GM12878 (cell line): ENCODE measurements at regions of chr9 and their contacts with region 1.

Region 1: GRCh38 chr9:6681147-6681956 is 35.8 kb upstream of the GLDC start:
- DNase-seq: peak; percentile 88
- ATAC-seq: peak; percentile 84
- H3K4me3 ChIP-seq: peak overlapping the region; percentile 88
- H3K27ac ChIP-seq: peak overlapping the region; percentile 99
- H3K4me1 ChIP-seq: peaks cover 20% of the 10 kb centered on the region
- H3K27me3 ChIP-seq: no peaks in the 10 kb centered on the region
- CTCF ChIP-seq: no peak
- EP300 ChIP-seq: peak in 1 of 2 experiments; percentile 20; a peak in 1 of 4 replicates
- POLR2A ChIP-seq: peak; percentile 91
- RAD21 ChIP-seq: no peak

Region 2: DNA sequence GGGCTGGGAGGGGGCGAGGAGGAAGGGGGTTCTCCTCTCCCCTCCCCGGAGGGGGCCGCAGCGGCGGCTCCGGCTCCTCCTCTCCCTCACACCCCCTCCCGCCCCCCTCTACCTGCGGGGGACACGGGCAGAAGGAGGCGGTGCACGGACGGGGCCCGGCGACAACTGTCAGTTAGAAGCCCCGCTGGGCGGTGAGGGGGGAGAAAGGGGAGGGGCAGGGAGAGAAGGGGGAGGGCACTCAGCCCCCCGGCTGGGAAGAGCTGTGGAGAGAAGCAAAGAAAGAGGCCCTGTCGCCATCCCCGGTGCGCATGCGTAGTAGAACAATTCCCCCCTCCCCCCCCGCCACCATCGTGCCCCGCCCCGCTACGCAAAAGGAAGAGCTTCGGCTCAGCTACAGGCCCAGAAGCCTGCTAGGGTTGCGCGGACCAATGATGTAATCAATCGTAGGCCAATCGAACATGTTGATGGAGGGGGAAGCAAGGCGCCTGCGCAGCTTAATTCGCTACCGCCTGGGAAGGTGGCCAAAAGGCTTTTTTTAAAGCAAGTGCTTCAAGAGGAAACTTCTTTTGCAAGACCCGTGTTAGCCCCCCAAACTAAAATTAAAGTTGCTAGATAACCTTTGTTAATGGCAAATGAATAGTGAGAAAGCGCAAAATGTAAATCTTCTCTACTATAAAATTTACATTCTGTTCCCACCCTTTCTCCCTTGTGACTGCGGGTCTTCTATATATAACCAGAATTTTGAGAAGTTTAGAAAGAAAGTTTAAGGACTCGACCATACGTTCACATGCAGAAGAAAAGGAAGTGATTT is 673.0 kb before region 1 on chr9:
- CTCF ChIA-PET with region 1: no interaction called
- POLR2A ChIA-PET with region 1: no interaction called
- RAD21 ChIA-PET with region 1: no interaction called
- SMC1A ChIA-PET with region 1: no interaction called
- in situ Hi-C with region 1: no loop called
- intact Hi-C with region 1: loop called (anchors 10 kb)
- DNase-seq: peak; percentile 88
- ATAC-seq: peak; percentile 74
- H3K4me3 ChIP-seq: peak overlapping the region; percentile 82
- H3K27ac ChIP-seq: peak overlapping the region; percentile 66
- H3K4me1 ChIP-seq: peaks cover 12% of the 10 kb centered on the region
- H3K27me3 ChIP-seq: no peaks in the 10 kb centered on the region
- CTCF ChIP-seq: no peak
- EP300 ChIP-seq: no peak
- POLR2A ChIP-seq: peak; percentile 55
- RAD21 ChIP-seq: no peak

Region 3: GRCh38 chr9:6428940-6429889 is 252.1 kb before region 1 on chr9:
- CTCF ChIA-PET with region 1: no interaction called
- POLR2A ChIA-PET with region 1: no interaction called
- RAD21 ChIA-PET with region 1: no interaction called
- SMC1A ChIA-PET with region 1: interaction called, 3 read pairs
- in situ Hi-C with region 1: no loop called
- intact Hi-C with region 1: loop called (anchors 2 kb)
- DNase-seq: peak; percentile 49
- ATAC-seq: peak; percentile 93
- H3K4me3 ChIP-seq: no peak overlapping the region
- H3K27ac ChIP-seq: peak overlapping the region; percentile 55
- H3K4me1 ChIP-seq: peaks cover 54% of the 10 kb centered on the region
- H3K27me3 ChIP-seq: no peaks in the 10 kb centered on the region
- CTCF ChIP-seq: no peak
- EP300 ChIP-seq: peak in 1 of 2 experiments; percentile 59; a peak in 1 of 4 replicates
- POLR2A ChIP-seq: no peak
- RAD21 ChIP-seq: no peak

Region 4: DNA sequence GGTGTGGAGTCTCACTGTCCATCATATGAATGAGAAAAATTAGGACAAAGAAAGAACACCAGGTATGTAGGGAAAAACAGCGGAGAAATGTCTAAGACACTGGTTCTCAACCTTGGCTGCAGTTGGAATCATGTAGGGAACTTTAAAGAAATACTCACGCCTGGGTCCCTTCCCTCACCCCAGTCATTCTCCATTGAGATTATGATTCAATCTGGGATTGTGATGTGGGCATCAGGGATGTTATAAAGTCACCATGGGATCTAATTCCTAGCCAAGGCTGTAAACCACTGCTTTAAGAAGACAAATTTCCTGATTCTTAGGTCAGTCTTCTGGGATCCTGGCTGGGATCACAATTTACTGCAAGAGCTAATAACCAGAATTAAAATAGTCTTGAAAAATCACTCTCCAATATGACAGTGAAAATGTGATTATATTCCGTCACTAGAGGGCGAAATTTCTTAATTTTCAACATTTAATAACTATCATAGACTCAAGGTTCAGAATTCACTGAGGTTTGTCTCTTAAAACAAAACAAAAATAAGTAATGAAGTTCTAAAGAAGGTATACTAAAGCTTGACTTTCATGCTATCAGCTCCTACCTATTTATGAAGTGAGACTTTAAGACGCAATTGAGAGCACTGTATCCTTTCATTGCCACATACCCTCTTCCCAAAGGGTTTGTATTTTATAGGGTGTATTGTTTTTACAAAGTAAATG is 96.3 kb before region 1 on chr9:
- CTCF ChIA-PET with region 1: interaction called, 56 read pairs
- POLR2A ChIA-PET with region 1: interaction called, 3 read pairs
- RAD21 ChIA-PET with region 1: interaction called, 17 read pairs
- SMC1A ChIA-PET with region 1: interaction called, 40 read pairs
- in situ Hi-C with region 1: no loop called
- intact Hi-C with region 1: loop called (anchors 1 kb)
- DNase-seq: no peak
- ATAC-seq: peak; percentile 85
- H3K4me3 ChIP-seq: no peak overlapping the region
- H3K27ac ChIP-seq: no peak overlapping the region
- H3K4me1 ChIP-seq: no peaks in the 10 kb centered on the region
- H3K27me3 ChIP-seq: no peaks in the 10 kb centered on the region
- CTCF ChIP-seq: peak in 2 of 3 experiments; percentile 13 to 35; a peak in 3 of 6 replicates
- EP300 ChIP-seq: no peak
- POLR2A ChIP-seq: no peak
- RAD21 ChIP-seq: peak; percentile 42; the same call in 1 of the 2 replicates

Region 5: GRCh38 chr9:6645355-6646292 is 35.7 kb before region 1 on chr9 and contains the start of gene GLDC:
- CTCF ChIA-PET with region 1: interaction called, 5 read pairs
- POLR2A ChIA-PET with region 1: interaction called, 17 read pairs
- RAD21 ChIA-PET with region 1: interaction called, 7 read pairs
- SMC1A ChIA-PET with region 1: interaction called, 17 read pairs
- in situ Hi-C with region 1: no loop called
- intact Hi-C with region 1: loop called (anchors 2 kb)
- DNase-seq: no peak
- ATAC-seq: peak; percentile 91
- H3K4me3 ChIP-seq: peak within 1 kb of the TSS; percentile 94
- H3K27ac ChIP-seq: peak within 1 kb of the TSS; percentile 75
- H3K4me1 ChIP-seq: no peaks in the 10 kb centered on the region; the same call in 1 of the 2 replicates
- H3K27me3 ChIP-seq: no peaks in the 10 kb centered on the region
- CTCF ChIP-seq: no peak
- EP300 ChIP-seq: no peak
- POLR2A ChIP-seq: peak; percentile 80
- RAD21 ChIP-seq: no peak
- polyA plus RNA-seq, gene GLDC: 88.2 to 112 TPM

Region 6: DNA sequence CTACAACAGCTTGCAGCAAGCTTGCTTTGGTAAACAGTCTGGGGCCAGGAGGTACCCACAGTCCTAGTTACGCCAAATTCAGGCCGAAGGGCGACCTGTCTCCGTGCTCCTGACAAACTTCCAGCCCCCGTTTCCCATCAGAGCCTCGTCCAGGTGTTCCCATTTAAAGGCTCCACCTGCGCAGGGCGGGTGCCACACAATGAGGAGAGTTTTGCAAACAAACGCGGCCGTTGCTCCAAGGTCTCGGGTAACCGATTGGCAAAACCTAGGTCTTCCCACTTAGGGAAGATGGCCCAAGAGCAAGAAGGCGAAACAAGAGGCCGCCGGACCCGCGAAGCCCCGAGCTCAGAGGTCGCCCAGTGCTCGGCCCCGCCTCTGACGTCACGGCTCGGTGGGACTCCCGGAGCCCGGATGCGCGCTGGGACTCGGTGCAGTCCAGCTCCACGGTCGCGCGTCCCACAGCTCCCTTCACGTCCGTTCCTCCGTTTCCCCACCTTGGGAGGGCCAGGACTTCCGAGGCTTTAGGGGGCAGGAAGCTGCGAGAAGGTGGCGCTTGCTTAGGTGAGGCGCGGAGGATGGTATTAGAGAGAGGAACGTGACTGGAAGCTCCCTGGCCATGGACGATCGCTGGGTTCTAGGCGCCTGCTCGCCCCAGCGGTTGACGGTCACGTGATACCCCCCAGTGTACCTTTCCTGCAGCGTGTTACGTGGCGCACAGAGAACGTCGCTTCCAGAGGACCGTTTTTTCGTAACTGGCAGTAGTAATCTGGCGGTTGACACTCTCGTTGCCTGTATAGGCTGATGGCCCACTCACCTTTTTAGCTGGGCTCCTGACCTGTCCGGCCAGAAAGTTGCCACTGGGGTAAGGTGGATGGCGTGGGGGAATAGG is 34.6 kb after region 1 on chr9:
- CTCF ChIA-PET with region 1: interaction called, 10 read pairs
- POLR2A ChIA-PET with region 1: interaction called, 15 read pairs
- RAD21 ChIA-PET with region 1: interaction called, 9 read pairs
- SMC1A ChIA-PET with region 1: interaction called, 44 read pairs
- in situ Hi-C with region 1: no loop called
- intact Hi-C with region 1: no loop called
- DNase-seq: peak; percentile 76
- ATAC-seq: peak; percentile 96
- H3K4me3 ChIP-seq: peak overlapping the region; percentile 68
- H3K27ac ChIP-seq: peak overlapping the region; percentile 73
- H3K4me1 ChIP-seq: peaks cover 13% of the 10 kb centered on the region
- H3K27me3 ChIP-seq: no peaks in the 10 kb centered on the region
- CTCF ChIP-seq: no peak
- EP300 ChIP-seq: no peak
- POLR2A ChIP-seq: peak; percentile 97
- RAD21 ChIP-seq: no peak

Region 7: GRCh38 chr9:6757456-6758247 is 76.3 kb after region 1 on chr9 and contains the start of gene KDM4C:
- CTCF ChIA-PET with region 1: interaction called, 4 read pairs
- POLR2A ChIA-PET with region 1: interaction called, 10 read pairs
- RAD21 ChIA-PET with region 1: interaction called, 15 read pairs
- SMC1A ChIA-PET with region 1: interaction called, 4 read pairs
- in situ Hi-C with region 1: no loop called
- intact Hi-C with region 1: loop called (anchors 2 kb)
- DNase-seq: peak; percentile 88
- ATAC-seq: peak; percentile 89
- H3K4me3 ChIP-seq: peak within 1 kb of the TSS; percentile 76
- H3K27ac ChIP-seq: peak within 1 kb of the TSS; percentile 96
- H3K4me1 ChIP-seq: peaks cover 6% of the 10 kb centered on the region
- H3K27me3 ChIP-seq: no peaks in the 10 kb centered on the region
- CTCF ChIP-seq: no peak
- EP300 ChIP-seq: peak in 1 of 2 experiments; percentile 54; a peak in 2 of 4 replicates
- POLR2A ChIP-seq: peak; percentile 95
- RAD21 ChIP-seq: no peak
- polyA plus RNA-seq, gene KDM4C: 6.8 to 11.7 TPM

Region 8: DNA sequence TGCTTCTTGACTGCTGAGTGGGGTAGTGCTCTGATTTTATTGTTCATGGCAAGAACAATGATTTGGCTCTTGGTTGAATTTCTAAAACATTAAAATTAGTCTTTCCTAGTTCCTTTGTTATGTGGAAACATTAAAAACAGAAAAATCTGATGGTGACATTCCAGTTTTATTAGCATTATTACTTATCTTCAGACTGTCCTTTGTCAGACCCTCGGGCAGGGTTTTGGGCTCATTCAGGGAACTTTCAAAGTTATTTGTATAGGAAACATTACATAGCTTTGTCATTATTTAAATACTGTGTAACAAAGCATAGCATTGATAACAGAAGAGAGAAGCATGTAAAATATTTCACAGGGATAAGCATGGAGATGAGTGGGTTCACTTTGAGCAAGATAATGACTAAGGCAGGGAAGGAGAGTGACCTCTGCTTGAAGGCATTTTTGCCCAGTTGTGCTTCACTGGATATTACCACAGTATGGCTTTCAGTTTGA is 196.4 kb after region 1 on chr9:
- CTCF ChIA-PET with region 1: no interaction called
- POLR2A ChIA-PET with region 1: no interaction called
- RAD21 ChIA-PET with region 1: no interaction called
- SMC1A ChIA-PET with region 1: no interaction called
- in situ Hi-C with region 1: no loop called
- intact Hi-C with region 1: no loop called
- DNase-seq: no peak
- ATAC-seq: no peak
- H3K4me3 ChIP-seq: no peak overlapping the region
- H3K27ac ChIP-seq: no peak overlapping the region
- H3K4me1 ChIP-seq: no peaks in the 10 kb centered on the region
- H3K27me3 ChIP-seq: no peaks in the 10 kb centered on the region
- CTCF ChIP-seq: no peak
- EP300 ChIP-seq: no peak
- POLR2A ChIP-seq: no peak
- RAD21 ChIP-seq: no peak

Region 9: GRCh38 chr9:7536310-7536939 is 855.1 kb after region 1 on chr9:
- CTCF ChIA-PET with region 1: no interaction called
- POLR2A ChIA-PET with region 1: no interaction called
- RAD21 ChIA-PET with region 1: no interaction called
- SMC1A ChIA-PET with region 1: no interaction called
- in situ Hi-C with region 1: no loop called
- intact Hi-C with region 1: no loop called
- DNase-seq: no peak
- ATAC-seq: peak; percentile 98
- H3K4me3 ChIP-seq: no peak overlapping the region
- H3K27ac ChIP-seq: no peak overlapping the region
- H3K4me1 ChIP-seq: no peaks in the 10 kb centered on the region
- H3K27me3 ChIP-seq: no peaks in the 10 kb centered on the region
- CTCF ChIP-seq: peak; percentile 63 to 79 (median 76)
- EP300 ChIP-seq: no peak
- POLR2A ChIP-seq: no peak
- RAD21 ChIP-seq: peak; percentile 79